Common myeloid progenitor, CD34-positive (primary cell): ENCODE measurements at regions of chr19 and their contacts with region 1.

Region 1: DNA sequence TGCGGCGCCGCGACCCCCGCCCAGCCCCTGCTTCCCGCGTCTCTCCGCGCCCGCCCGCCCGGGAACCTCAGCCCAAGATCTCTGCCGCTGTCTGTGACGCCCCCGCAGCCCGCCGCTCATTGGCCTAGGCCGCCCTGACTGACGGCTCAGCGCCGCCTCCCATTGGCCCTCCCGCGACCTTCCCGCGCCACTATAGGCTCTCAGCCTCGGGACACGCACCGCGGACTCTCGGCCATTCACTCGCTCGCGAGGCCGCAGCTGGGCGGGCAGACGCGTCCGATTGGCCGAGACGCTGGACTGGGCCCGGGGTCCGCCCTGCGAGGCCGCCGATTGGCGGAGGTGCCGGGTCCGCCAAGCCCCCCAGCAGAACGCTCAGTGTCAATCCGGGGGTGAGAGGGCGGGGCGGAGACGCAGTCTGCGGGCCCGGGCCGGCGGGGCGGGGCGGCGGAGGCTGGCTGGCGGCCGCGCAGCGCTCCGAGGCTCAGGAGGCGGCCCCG is at the start of gene PRKACA:
- DNase-seq: peak; percentile 99
- H3K4me3 ChIP-seq: peak within 1 kb of the TSS; percentile 61 to 86 (median 73)
- H3K27ac ChIP-seq: peak within 1 kb of the TSS; percentile 54 to 88
- H3K4me1 ChIP-seq: peaks cover 7 to 61% (median 31%) of the 10 kb centered on the region in 4 experiments
- H3K27me3 ChIP-seq: no peaks in the 10 kb centered on the region

Region 2: DNA sequence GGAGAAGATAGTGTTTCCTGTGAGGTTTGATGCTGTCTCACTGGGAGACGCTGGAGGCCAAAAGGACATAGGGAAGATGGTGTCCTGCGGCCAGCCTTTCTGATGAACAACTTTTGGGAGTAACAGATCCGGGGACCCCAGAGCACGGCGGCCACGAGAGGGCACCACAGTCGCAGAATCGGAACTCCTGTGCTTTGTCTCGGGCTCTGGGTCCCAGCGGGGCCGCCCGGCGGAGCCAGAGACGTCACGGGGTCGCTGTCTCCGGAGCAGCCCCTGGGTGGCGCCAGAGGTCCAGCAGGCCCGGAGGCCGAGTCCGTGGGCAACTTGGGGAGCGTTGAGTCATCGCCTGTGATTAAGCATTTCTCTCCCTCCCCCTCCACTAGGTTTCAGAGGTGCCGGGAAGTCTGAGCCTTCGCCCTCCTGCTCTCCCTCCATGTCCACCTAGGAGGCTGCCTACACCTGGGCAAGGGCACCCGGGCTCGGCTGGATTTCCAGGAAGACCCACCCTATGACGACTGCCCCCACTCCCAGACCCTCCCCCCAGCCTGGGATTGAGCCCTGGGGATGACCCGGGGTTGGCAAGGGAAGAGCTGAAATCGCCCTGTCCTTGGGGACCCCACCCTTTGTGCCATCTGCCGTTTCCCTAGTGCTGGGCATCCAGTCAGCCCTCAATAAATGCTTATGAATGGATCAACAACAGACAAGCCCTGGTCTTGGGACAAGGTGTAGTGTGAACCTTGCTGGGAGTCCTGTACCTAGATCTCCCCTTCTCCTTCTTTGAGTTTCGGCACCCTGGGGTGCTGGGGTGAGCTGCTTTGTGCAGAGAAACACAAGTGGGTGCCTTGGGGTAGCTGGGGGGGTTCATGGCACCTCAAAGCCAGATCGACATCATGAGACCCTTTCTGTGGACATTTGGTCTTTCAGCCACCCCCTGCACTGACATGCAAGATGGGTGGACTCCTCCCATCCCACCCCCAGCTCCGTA is 237.4 kb before region 1 on chr19:
- CTCF ChIA-PET with region 1: interaction called, 10 read pairs
- POLR2A ChIA-PET with region 1: no interaction called
- DNase-seq: peak; percentile 95 to 98 (median 97)
- H3K4me3 ChIP-seq: peak overlapping the region in 6 of 7 experiments; percentile 3 to 65 (median 47)
- H3K27ac ChIP-seq: peak overlapping the region in 1 of 2 experiments; percentile 82
- H3K4me1 ChIP-seq: peaks cover 3 to 65% (median 43%) of the 10 kb centered on the region in 4 experiments
- H3K27me3 ChIP-seq: no peaks in the 10 kb centered on the region

Region 3: GRCh38 chr19:13978347-13978733 is 139.4 kb before region 1 on chr19:
- CTCF ChIA-PET with region 1: no interaction called
- POLR2A ChIA-PET with region 1: no interaction called
- DNase-seq: peak; percentile 57 to 78 (median 76)
- H3K4me3 ChIP-seq: peak overlapping the region in 3 of 7 experiments; percentile 61 to 76 (median 69)
- H3K27ac ChIP-seq: peak overlapping the region in 1 of 2 experiments; percentile 43
- H3K4me1 ChIP-seq: peaks cover 0 to 55% (median 48%) of the 10 kb centered on the region in 4 experiments
- H3K27me3 ChIP-seq: no peaks in the 10 kb centered on the region

Region 4: DNA sequence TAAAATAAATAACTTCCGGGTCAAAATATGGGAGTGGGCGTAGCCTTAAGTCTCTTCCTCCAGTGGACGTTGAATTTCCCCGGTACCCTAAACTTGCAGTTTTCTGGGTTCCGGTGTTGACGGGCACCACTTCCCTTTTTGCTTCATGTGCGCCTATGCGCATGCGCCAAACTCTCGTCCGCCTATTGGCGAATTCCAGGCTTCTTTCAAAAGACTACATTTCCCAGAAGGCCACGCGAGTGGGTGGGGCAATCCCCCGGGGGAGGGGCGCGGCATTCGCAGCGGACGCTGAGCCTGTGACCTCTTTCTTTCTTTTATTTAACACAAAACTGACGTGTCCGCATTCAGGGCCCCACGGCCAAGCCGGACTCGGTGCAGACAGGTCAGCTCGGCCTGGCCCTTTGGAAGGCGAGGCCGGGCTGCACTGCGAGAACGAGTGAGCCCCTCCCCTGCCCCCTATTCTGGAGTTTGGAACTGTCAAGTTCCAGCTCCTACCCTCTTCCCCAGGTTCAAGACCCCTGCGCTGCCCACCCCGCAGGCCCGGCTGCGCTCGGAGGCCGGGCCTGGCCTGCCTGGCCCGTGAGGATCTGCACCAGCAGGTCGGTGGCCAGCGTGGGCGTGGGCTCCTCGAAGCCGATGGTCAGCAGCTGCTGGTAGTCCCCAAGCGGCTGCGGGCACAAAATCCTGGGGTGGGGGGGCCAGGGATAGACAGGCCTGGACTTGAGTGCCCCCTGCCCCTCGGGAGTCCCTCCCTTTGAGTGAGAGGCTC is 36.2 kb before region 1 on chr19:
- CTCF ChIA-PET with region 1: interaction called, 12 read pairs
- POLR2A ChIA-PET with region 1: no interaction called
- DNase-seq: peak; percentile 99 to 100 (median 99)
- H3K4me3 ChIP-seq: peak overlapping the region; percentile 76 to 91 (median 83)
- H3K27ac ChIP-seq: peak overlapping the region; percentile 79 to 91
- H3K4me1 ChIP-seq: peaks cover 2 to 24% (median 20%) of the 10 kb centered on the region in 4 experiments
- H3K27me3 ChIP-seq: no peaks in the 10 kb centered on the region

Region 5: GRCh38 chr19:14096272-14096992 is 21.3 kb before region 1 on chr19:
- CTCF ChIA-PET with region 1: interaction called, 25 read pairs
- POLR2A ChIA-PET with region 1: interaction called, 4 read pairs
- DNase-seq: no peak
- H3K4me3 ChIP-seq: no peak overlapping the region
- H3K27ac ChIP-seq: no peak overlapping the region
- H3K4me1 ChIP-seq: peaks cover 0 to 13% (median 9%) of the 10 kb centered on the region in 4 experiments
- H3K27me3 ChIP-seq: no peaks in the 10 kb centered on the region

Region 6: GRCh38 chr19:14136509-14137281 is 19.0 kb after region 1 on chr19 and contains the start of gene ASF1B:
- CTCF ChIA-PET with region 1: interaction called, 30 read pairs
- POLR2A ChIA-PET with region 1: no interaction called
- DNase-seq: peak; percentile 100
- H3K4me3 ChIP-seq: peak within 1 kb of the TSS; percentile 62 to 90 (median 82)
- H3K27ac ChIP-seq: peak within 1 kb of the TSS; percentile 84 to 86
- H3K4me1 ChIP-seq: peaks cover 2 to 38% (median 24%) of the 10 kb centered on the region in 4 experiments
- H3K27me3 ChIP-seq: no peaks in the 10 kb centered on the region

Region 7: DNA sequence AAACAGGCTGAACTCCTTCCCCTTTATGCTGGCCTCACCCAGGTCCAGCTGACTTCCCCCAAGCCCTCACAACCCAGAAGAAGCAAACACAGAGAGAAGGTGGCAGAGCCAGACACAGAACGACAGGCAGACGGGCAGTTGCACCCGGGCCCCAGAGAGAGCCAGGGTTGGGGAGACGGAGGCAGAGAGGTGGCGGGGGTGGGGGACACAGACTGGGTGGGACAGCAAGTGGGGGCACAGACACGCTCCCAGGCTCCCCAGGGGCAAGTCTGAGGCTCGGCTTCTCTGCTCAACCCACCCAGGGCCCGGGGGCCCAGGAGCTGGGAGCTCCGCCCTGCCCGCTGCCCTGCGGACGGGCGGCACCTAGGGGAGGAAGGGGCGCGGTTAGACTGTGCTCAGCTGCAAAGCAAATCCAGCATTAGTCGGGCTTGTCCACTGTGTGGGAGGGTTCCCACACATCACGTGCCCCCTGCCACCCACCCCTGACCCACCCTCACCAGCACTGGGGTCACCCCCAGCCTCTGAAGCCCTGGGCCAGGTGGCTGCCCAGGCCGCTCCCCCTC is 49.9 kb after region 1 on chr19:
- CTCF ChIA-PET with region 1: no interaction called
- POLR2A ChIA-PET with region 1: no interaction called
- DNase-seq: peak; percentile 30 to 76 (median 69)
- H3K4me3 ChIP-seq: peak overlapping the region in 5 of 7 experiments; percentile 7 to 69 (median 48)
- H3K27ac ChIP-seq: peak overlapping the region in 1 of 2 experiments; percentile 70
- H3K4me1 ChIP-seq: peaks cover 0 to 36% (median 32%) of the 10 kb centered on the region in 4 experiments
- H3K27me3 ChIP-seq: no peaks in the 10 kb centered on the region

Region 8: DNA sequence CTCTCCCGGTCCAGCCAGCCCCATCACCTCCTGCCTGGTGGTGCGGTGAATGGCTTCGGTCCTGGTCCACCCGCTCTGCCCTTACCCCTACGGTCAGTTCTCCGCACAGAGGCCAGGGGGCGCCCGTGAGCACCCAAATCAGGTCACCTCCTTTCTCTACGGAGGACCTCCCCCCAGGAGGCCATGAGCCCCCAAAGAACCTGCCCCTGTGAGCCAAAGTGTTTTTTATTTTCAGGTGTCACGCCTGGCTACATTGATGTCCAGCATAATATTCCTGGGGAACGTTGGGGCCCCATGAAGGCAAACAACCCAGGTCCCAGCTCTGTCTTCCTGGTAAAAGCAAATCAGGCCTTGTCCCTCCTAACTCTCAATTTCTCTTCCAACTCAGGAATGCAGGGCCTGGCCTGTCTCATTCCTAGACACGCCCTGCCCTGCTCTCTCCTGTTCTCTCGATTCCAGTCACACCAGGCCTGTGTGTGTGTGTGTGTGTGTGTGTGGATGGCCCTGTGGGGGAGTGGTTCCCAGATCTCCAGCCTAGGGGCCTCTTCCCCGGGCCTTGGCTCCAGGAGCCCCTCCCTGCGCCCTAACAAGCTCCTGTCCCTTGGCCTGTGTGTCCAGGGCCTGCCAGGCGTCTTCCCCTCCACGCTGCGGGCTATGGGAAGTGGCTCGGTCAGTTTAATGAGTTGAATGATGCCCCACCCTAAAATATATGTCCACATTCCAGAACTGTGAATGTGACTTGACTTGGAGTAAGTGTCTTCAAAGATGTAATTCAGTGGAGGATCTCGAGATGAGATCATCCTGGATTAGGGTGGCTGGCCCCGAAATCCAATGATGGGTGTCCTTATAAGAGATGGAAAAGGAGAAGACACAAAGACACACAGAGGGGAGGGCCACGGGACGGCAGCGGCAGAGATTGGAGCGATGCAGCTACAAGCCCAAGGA is 388.0 kb after region 1 on chr19:
- CTCF ChIA-PET with region 1: no interaction called
- POLR2A ChIA-PET with region 1: no interaction called
- DNase-seq: peak; percentile 63 to 81 (median 76)
- H3K4me3 ChIP-seq: no peak overlapping the region
- H3K27ac ChIP-seq: no peak overlapping the region
- H3K4me1 ChIP-seq: peaks cover 5 to 11% (median 6%) of the 10 kb centered on the region in 4 experiments
- H3K27me3 ChIP-seq: no peaks in the 10 kb centered on the region